Esophagus muscularis mucosa (tissue), 4 donors: ENCODE measurements at regions of chr15 and their contacts with region 1.

Region 1: GRCh38 chr15:92881802-92882696 is 18.1 kb upstream of the CHD2 start:
- DNase-seq: peak; percentile 100
- H3K4me3 ChIP-seq: peak overlapping the region; percentile 94 to 98 (median 97)
- H3K27ac ChIP-seq: peak overlapping the region; percentile 91 to 100 (median 100)
- H3K4me1 ChIP-seq: peaks cover 27 to 38% (median 37%) of the 10 kb centered on the region in 4 donors
- H3K27me3 ChIP-seq: no peaks in the 10 kb centered on the region
- CTCF ChIP-seq: peak in 1 of 3 experiments; percentile 6
- EP300 ChIP-seq: no peak
- POLR2A ChIP-seq: peak; percentile 85

Region 2: GRCh38 chr15:92808978-92809879 is 72.8 kb before region 1 on chr15:
- intact Hi-C with region 1: loop called (anchors 1 kb)
- DNase-seq: peak; percentile 100
- H3K4me3 ChIP-seq: peak overlapping the region; percentile 64 to 70 (median 68)
- H3K27ac ChIP-seq: peak overlapping the region; percentile 91 to 98 (median 96)
- H3K4me1 ChIP-seq: peaks cover 29 to 59% (median 54%) of the 10 kb centered on the region in 4 donors
- H3K27me3 ChIP-seq: no peaks in the 10 kb centered on the region
- CTCF ChIP-seq: peak in 2 of 3 experiments; percentile 97 to 99
- EP300 ChIP-seq: no peak
- POLR2A ChIP-seq: peak; percentile 41

Region 3: DNA sequence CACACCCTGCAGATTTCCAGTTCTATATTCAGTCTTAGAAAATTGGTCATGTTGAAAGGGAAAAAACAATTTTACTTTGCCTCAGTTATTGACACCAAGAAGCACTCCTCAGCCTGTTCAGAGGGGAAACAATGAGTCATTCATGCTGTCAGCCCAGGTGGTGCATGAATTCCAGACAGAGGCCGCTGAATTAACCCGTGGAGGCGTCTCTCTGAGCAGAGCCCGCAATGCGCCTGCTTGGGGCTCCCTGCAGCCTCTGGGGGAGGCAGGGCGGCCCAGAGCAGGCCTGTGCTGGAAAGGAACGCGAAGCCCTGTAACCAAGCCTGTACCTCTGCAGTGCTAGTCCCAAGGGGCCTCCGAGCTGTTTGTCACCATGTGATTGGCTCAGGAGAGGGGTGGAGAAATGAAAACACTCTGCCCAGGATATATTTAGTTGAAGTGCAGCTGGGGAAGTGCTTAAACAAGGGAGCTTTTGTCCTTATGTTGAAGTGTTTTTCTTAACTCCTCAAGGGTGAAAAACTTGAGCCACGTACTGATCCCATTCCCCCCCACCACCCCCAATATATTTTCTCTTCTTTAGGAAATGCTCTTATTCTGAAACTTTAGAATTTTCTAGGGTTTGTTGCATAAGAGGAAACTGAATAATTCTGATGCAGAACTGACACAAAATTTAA is 50.3 kb before region 1 on chr15:
- intact Hi-C with region 1: loop called (anchors 5 kb)
- DNase-seq: peak; percentile 97
- H3K4me3 ChIP-seq: peak overlapping the region; percentile 32 to 51 (median 43)
- H3K27ac ChIP-seq: peak overlapping the region; percentile 87 to 93 (median 92)
- H3K4me1 ChIP-seq: peaks cover 39 to 57% (median 52%) of the 10 kb centered on the region in 4 donors
- H3K27me3 ChIP-seq: no peaks in the 10 kb centered on the region
- CTCF ChIP-seq: peak in 1 of 3 experiments; percentile 8
- EP300 ChIP-seq: no peak
- POLR2A ChIP-seq: peak; percentile 27